Posterior vena cava (tissue), 2 donors: ENCODE measurements at regions of chr3 and their contacts with region 1.

Region 1: GRCh38 chr3:160883373-160883772 is 127.3 kb downstream of the PPM1L start:
- DNase-seq: no peak

Region 2: GRCh38 chr3:160368804-160369203 is 514.6 kb before region 1 on chr3:
- intact Hi-C with region 1: loop called in 1 of 2 experiments (anchors 5 kb)
- DNase-seq: no peak

Region 3: DNA sequence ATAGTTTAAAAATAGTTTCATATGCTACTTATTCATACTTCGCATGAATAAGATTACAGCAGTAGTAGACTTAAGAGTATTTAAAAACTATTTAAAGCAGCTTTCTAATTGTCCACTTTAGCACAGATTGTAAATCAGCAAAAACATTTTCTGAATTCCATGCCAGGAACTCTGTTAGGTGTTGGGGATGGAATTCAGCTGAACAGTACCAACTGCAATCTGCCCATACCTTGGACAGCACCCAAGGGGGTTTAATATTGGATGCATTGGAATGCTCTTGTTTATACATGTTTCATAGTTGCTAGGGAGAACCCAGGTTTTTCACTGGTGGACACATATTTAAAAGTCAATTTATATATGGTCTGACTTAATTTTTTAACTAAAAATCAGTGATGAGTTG is 52.6 kb before region 1 on chr3:
- intact Hi-C with region 1: no loop called
- DNase-seq: no peak

Region 4: DNA sequence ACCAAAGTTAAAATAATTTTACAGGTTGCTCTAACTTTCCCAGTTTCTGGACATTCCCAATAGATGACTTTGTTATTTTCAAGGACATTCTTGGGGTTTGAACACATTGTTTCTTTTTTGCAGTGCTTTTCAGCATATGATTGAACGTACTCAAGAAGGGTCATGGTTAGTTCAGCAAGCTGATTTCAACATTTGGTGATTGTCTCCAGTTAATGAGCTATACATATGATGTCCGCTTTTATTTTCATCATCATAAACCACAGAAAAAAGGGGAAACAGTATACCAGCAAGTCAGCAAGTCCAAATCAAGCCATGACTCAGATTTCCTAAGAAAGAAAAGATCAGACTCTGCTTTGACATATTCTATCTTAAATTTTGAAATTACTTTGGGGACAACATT is 152.3 kb after region 1 on chr3:
- intact Hi-C with region 1: no loop called
- DNase-seq: no peak